H1 (cell line): ENCODE measurements at regions of chr3 and their contacts with region 1.

Region 1: GRCh38 chr3:186259612-186260383 is 102.2 kb downstream of the DGKG start:
- DNase-seq: peak; percentile 77 to 89
- H3K4me3 ChIP-seq: no peak overlapping the region
- H3K27ac ChIP-seq: no peak overlapping the region
- H3K4me1 ChIP-seq: peaks cover 0 to 8% (median 4%) of the 10 kb centered on the region in 4 experiments; a peak in 3 of 7 replicates
- H3K27me3 ChIP-seq: no peaks in the 10 kb centered on the region; a peak in 2 of 7 replicates
- CTCF ChIP-seq: peak; percentile 79 to 97 (median 94)
- EP300 ChIP-seq: peak in 1 of 2 experiments; percentile 41; a peak in 1 of 3 replicates
- POLR2A ChIP-seq: 0 out of 3 replicates have a peak, but pooled peaks of 1 of the 2 experiments have one; percentile 29
- RAD21 ChIP-seq: peak; percentile 87 to 93

Region 2: GRCh38 chr3:185942907-185943759 is 316.7 kb before region 1 on chr3:
- CTCF ChIA-PET with region 1: interaction called, 17 read pairs
- POLR2A ChIA-PET with region 1: interaction called, 7 read pairs
- DNase-seq: peak; percentile 84 to 93
- H3K4me3 ChIP-seq: no peak overlapping the region
- H3K27ac ChIP-seq: no peak overlapping the region
- H3K4me1 ChIP-seq: peaks cover 0 to 2% (median 0%) of the 10 kb centered on the region in 4 experiments; a peak in 1 of 7 replicates
- H3K27me3 ChIP-seq: no peaks in the 10 kb centered on the region
- CTCF ChIP-seq: peak; percentile 82 to 100 (median 92)
- EP300 ChIP-seq: peak in 1 of 2 experiments; percentile 21; a peak in 1 of 3 replicates
- POLR2A ChIP-seq: no peak
- RAD21 ChIP-seq: peak; percentile 61 to 74

Region 3: DNA sequence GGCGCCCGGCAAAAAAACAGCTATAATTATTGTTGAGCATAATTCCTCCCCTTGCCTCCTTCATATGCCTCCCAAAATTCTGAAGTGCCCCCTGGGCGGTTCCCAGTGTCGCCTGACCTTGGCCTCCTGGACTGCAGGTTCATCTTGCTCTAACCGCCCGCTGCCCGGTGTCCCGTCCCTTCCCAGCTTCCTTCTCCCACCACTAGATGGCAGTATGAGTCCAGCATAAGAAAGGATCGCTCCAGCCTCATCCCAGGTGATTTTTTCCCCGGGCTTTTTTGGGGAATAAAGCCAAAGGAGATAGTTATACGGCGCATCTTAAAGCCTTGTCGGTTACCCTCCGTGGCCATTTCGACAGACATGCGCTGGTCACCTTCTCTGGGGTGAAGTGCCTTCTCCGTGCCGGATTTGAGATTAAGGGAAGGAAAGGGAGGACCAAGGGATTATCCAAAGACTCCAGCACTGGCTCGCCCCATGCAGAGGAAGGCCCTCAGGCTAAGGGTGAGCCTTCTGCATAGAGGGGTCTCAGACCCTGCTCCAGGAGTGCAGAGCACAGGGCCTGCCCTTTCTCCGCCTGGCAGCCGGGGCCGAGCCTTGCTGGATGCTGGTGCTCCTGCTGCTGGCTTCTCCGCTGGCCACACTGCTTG is 276.2 kb before region 1 on chr3:
- CTCF ChIA-PET with region 1: interaction called, 28 read pairs
- POLR2A ChIA-PET with region 1: interaction called, 3 read pairs
- DNase-seq: peak; percentile 49 to 90
- H3K4me3 ChIP-seq: peak overlapping the region in 3 of 4 experiments; percentile 12 to 44 (median 34); a peak in 5 of 8 replicates
- H3K27ac ChIP-seq: no peak overlapping the region
- H3K4me1 ChIP-seq: peaks cover 0 to 5% (median 2%) of the 10 kb centered on the region in 4 experiments; a peak in 3 of 7 replicates
- H3K27me3 ChIP-seq: peaks cover 0 to 3% (median 0%) of the 10 kb centered on the region in 4 experiments; a peak in 2 of 7 replicates
- CTCF ChIP-seq: peak; percentile 85 to 93 (median 88)
- EP300 ChIP-seq: no peak
- POLR2A ChIP-seq: no peak
- RAD21 ChIP-seq: peak; percentile 98 to 99

Region 4: DNA sequence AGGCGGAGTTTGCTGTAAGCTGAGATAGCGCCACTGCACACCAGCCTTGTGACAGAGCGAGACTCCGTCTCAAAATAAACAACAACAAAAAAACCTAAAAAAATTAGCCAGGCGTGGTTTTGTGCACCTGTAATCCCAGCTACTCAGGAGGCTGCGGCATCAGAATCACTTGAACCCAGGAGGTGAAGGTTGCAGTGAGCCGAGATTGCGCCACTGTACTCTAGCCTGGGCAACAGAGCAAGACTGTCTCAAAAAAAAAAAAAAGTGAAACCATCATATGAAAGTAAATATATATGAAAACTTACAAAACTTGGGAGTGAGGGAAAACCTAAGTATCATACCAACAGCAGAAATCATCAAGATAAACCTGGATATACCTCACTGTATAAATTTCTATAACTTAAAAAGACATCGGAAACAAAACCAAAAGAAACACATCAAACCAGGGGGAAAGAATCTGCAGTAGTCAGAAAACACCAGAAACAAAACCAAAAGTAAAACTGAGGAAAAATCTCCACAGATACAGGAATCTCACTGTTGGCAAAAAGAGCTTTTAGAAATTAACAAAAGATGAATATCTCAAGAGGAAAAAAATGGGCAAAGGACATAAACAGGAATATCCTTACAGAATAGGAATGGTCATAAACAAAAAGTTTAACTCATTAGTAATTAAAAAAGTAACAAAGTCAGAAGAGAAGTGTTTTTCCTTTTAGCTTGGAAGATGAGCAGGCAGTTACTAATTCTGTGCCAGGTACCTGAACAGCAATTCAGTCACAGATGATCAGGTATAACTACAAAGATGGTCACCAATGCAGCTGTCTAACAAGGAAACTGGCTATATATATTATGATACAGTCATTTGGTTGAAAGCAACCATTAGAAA is 192.2 kb before region 1 on chr3:
- CTCF ChIA-PET with region 1: no interaction called
- POLR2A ChIA-PET with region 1: no interaction called
- DNase-seq: no peak
- H3K4me3 ChIP-seq: no peak overlapping the region
- H3K27ac ChIP-seq: no peak overlapping the region
- H3K4me1 ChIP-seq: no peaks in the 10 kb centered on the region
- H3K27me3 ChIP-seq: no peaks in the 10 kb centered on the region
- CTCF ChIP-seq: no peak
- EP300 ChIP-seq: no peak
- POLR2A ChIP-seq: no peak
- RAD21 ChIP-seq: no peak

Region 5: GRCh38 chr3:186209810-186210752 is 49.7 kb before region 1 on chr3:
- CTCF ChIA-PET with region 1: interaction called, 10 read pairs
- POLR2A ChIA-PET with region 1: no interaction called
- DNase-seq: peak in 1 of 2 experiments; percentile 58
- H3K4me3 ChIP-seq: no peak overlapping the region
- H3K27ac ChIP-seq: no peak overlapping the region
- H3K4me1 ChIP-seq: peaks cover 4 to 16% (median 10%) of the 10 kb centered on the region in 4 experiments; a peak in 6 of 7 replicates
- H3K27me3 ChIP-seq: no peaks in the 10 kb centered on the region
- CTCF ChIP-seq: no peak
- EP300 ChIP-seq: no peak
- POLR2A ChIP-seq: no peak
- RAD21 ChIP-seq: no peak

Region 6: GRCh38 chr3:186277268-186277909 is 17.6 kb after region 1 on chr3:
- CTCF ChIA-PET with region 1: interaction called, 85 read pairs
- POLR2A ChIA-PET with region 1: no interaction called
- DNase-seq: no peak
- H3K4me3 ChIP-seq: no peak overlapping the region
- H3K27ac ChIP-seq: no peak overlapping the region
- H3K4me1 ChIP-seq: no peaks in the 10 kb centered on the region
- H3K27me3 ChIP-seq: no peaks in the 10 kb centered on the region
- CTCF ChIP-seq: peak; percentile 53 to 72 (median 67)
- EP300 ChIP-seq: no peak
- POLR2A ChIP-seq: no peak
- RAD21 ChIP-seq: peak; percentile 86 to 92